OCI-LY7 (cell line): ENCODE measurements at regions of chr11 and their contacts with region 1.

Region 1: DNA sequence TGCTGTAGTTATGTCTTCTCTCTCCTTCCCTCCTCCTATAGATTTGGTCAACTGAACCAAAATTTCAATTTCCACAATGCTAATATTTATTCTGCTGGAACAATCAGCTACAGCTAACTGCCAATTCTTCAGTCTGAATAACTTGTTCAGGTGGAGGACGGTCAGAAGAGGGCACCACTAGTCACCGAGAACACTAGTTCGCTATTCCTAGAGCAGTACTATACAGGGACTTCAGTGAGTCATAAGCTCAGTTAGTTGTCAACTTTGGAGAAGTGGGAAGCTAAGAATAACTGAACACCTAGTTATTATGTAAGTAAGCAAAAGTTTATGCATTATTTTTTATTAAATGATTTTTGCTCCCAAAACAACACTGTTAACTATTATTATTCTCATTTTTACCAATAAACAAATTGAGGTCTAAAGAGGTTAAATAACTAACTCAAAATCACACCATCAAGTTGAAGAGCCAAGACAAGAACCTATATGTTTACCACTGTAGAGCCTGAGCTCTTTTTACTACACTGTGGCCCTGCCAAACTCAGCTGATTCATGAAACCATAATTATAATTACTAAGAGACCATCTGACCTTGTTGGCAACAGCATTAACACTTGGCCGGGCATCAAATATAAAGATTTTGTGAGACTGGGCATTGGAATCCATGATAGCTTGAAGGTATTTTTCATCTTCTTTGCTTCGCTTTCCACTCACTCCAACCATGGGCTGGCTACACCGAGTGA is 59.0 kb downstream of the CEP57 start:
- DNase-seq: peak; percentile 24
- H3K4me3 ChIP-seq: no peak overlapping the region
- H3K27ac ChIP-seq: no peak overlapping the region
- H3K4me1 ChIP-seq: no peaks in the 10 kb centered on the region
- CTCF ChIP-seq: peak; percentile 69

Region 2: DNA sequence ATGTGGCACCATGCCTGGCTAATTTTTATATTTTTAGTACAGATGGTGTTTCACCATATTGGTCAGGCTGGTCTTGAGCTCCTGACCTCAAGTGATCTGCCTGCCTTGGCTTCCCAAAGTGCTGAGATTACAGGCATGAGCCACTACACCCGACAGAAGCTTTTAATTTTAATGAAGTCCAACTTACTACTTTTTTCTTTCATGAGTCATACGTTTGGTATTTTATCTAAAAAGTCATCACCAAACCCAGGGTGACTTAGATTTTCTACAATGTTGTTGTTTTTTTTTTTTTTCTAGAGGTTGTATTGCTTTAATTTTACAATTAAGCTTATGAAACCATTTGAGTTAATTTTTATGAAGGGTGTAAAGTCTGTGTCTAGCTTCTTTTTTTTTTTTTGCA is 575.4 kb after region 1 on chr11:
- CTCF ChIA-PET with region 1: no interaction called
- POLR2A ChIA-PET with region 1: no interaction called
- intact Hi-C with region 1: loop called (anchors 5 kb)
- DNase-seq: no peak
- H3K4me3 ChIP-seq: no peak overlapping the region
- H3K27ac ChIP-seq: no peak overlapping the region
- H3K4me1 ChIP-seq: no peaks in the 10 kb centered on the region
- CTCF ChIP-seq: no peak